Mammary epithelial cell (primary cell): ENCODE measurements at regions of chr7 and their contacts with region 1.

Region 1: DNA sequence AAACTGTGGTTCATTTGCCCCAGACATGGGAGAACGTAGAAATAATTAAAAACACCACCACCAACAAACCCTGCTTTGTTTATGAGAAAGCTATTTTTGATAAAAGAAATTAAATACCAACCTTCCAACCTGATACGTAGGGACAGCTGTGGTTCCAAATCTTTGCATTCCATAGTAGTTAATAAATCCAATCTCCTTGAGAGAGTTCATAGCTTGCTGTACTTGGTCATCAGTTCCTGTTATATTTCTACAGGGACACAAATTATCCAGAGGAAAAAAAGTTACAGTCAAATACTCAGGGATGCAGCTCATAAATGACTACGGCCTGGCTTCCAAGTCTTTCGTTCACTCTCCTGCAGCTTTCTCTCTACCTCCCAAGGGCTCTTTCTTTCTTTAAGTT is 41.1 kb downstream of the PUS7 start:
- DNase-seq: no peak
- H3K4me3 ChIP-seq: no peak overlapping the region
- H3K27ac ChIP-seq: no peak overlapping the region
- H3K4me1 ChIP-seq: no peaks in the 10 kb centered on the region
- H3K27me3 ChIP-seq: no peaks in the 10 kb centered on the region
- CTCF ChIP-seq: no peak

Region 2: DNA sequence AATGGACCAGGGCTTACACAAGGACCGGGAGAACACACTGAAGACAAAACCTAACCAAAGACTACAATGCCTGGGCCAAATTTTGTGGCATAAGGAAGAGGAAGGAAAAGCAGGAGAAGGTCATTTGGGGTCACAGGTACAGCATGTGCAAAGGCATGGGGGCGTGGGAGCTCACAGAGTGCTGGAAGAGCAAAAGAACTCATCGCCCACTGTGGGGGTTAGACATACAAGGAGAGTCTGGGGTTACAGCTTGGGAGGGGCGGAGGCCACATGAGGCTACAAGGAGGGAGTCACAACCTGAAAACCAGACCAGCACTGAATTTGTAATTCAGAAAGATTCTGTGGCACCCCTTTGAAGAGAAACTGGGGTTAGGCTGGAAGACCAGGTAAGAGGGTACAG is 31.5 kb after region 1 on chr7:
- CTCF ChIA-PET with region 1: interaction called, 12 read pairs
- dilution Hi-C with region 1: no loop called
- in situ Hi-C with region 1: no loop called
- intact Hi-C with region 1: no loop called
- DNase-seq: no peak
- H3K4me3 ChIP-seq: no peak overlapping the region
- H3K27ac ChIP-seq: no peak overlapping the region
- H3K4me1 ChIP-seq: no peaks in the 10 kb centered on the region
- H3K27me3 ChIP-seq: no peaks in the 10 kb centered on the region
- CTCF ChIP-seq: no peak